ENCODE measurements at regions of chr4 and their contacts with region 1.

Region 1: DNA sequence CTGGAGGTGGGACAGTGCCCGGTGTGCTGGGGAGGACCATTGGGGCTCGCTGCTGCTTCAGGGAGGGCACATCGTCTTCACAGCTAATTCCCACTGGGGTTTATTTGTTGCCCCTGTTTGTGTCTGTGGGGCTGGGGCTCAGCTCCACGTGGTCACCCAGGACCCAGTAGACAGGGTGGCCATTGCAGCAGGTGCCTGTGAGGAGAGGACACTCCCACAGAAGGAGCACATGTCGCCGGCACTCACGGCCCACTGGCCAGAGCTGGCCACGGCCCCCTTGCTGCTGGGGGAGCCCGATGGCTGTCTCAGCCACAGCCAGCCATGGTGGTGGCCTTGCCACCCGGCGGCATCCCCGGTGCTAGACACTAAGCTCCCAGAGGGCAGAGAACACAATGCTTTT is 27.8 kb upstream of the GRPEL1 start:
- DNase-seq: no peak
- H3K4me3 ChIP-seq: no peak overlapping the region
- H3K27ac ChIP-seq: no peak overlapping the region
- H3K4me1 ChIP-seq: no peaks in the 10 kb centered on the region
- H3K27me3 ChIP-seq: peaks cover 19 to 75% (median 61%) of the 10 kb centered on the region in 4 experiments
- CTCF ChIP-seq: no peak
- EP300 ChIP-seq: no peak
- POLR2A ChIP-seq: no peak
- RAD21 ChIP-seq: no peak

Region 2: GRCh38 chr4:7081891-7082471 is 13.7 kb before region 1 on chr4:
- CTCF ChIA-PET with region 1: interaction called, 65 read pairs
- POLR2A ChIA-PET with region 1: no interaction called
- DNase-seq: peak in 1 of 2 experiments; percentile 75
- H3K4me3 ChIP-seq: no peak overlapping the region
- H3K27ac ChIP-seq: no peak overlapping the region
- H3K4me1 ChIP-seq: no peaks in the 10 kb centered on the region; a peak in 1 of 7 replicates
- H3K27me3 ChIP-seq: peaks cover 0 to 14% (median 6%) of the 10 kb centered on the region in 4 experiments; a peak in 4 of 7 replicates
- CTCF ChIP-seq: peak; percentile 76 to 85 (median 78)
- EP300 ChIP-seq: no peak
- POLR2A ChIP-seq: no peak
- RAD21 ChIP-seq: peak; percentile 89 to 93